ENCODE measurements at regions of chr21 and their contacts with region 1.

Region 1: DNA sequence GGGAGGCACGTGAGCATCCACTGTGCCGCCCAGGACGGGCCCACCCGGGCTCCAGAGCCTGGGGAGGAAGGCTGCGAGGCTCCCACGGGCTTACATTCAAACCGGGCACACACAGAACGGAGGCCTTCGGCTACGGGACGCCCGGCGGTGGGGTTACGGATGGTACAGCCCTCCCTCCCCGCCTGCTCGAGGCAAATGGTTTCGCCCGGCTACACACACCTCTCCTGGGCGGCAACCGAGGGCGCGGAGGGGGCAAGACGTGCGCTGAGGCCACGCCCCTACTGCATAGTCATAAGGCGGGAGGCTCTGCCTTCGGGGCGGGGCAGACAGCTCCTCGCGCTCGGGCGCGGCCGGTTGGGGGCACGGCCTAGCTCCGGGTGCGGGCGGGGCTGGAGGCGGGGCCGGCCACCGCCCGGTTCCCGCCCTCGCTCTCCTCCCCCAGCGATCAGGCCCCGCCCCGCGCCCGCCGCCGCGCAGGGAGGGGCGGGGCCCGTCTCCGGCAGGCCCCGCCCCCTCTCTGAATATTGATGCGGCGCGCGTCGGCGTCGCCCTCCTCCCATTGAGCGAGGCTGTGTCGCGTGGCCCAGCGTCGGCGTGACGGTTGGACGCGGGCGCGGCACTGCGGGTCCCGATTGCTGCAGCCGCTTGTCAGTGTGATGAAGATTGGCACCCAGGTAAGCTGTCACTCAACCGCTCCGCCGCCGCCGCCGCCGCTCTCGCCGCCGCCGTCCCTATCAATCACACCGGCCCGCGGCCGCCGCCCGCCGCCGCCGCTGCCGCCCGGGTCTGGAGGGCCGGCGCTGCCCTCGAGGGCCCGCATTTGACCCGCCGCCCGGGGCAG is at the start of gene PKNOX1:
- DNase-seq: peak; percentile 98
- ATAC-seq: peak; percentile 85
- H3K4me3 Mint-ChIP-seq: peak within 1 kb of the TSS; percentile 89
- H3K27ac Mint-ChIP-seq: peak within 1 kb of the TSS; percentile 86
- H3K4me1 Mint-ChIP-seq: peaks cover 26% of the 10 kb centered on the region
- H3K27me3 Mint-ChIP-seq: no peaks in the 10 kb centered on the region
- CTCF ChIP-seq: no peak
- total RNA-seq, gene PKNOX1: 13.3 and 15.6 TPM in 2 replicates

Region 2: DNA sequence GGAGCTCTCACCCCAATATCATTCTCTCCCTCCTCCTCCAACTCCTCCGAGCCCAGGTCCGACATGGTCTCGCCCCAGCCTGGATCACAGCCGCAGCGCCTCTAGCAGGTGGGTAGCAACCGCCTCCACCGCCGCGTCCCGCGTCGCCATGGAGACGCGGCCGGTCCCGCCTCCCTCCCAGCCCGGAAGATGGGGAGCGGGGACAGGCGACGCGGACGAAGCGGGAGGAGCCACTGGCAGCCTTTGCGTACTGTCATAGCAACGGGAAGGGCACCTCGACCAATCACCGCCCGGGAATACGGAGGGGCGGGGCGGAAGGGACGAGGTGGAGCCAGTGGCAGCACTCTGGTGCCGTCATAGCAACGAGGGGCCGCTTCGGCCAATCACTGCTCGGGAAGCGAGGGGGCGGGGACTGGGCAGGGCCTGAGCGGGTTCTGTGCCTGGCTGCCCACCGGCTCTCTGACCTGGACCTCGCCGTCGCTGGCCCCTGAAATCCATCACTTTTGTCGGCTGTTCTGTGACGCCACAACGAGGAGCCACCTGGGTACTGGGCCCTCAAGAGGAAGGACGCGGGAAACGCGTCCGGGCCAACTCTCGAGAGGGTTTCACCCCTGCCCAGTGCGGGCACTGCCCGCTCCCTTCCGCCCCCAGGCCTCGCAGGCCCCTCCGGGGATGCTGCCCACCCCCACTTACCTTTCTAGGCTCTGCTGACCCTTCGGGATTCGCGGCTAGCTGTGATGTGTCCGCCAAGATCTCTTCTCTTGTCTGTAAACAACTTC is 477.9 kb before region 1 on chr21 and contains the start of gene RSPH1:
- CTCF ChIA-PET with region 1: no interaction called
- POLR2A ChIA-PET with region 1: no interaction called
- intact Hi-C with region 1: loop called (anchors 5 kb)
- DNase-seq: peak; percentile 99
- ATAC-seq: peak; percentile 96
- H3K4me3 Mint-ChIP-seq: peak within 1 kb of the TSS; percentile 88
- H3K27ac Mint-ChIP-seq: peak within 1 kb of the TSS; percentile 83
- H3K4me1 Mint-ChIP-seq: peaks cover 13% of the 10 kb centered on the region
- H3K27me3 Mint-ChIP-seq: no peaks in the 10 kb centered on the region
- CTCF ChIP-seq: no peak
- total RNA-seq, gene RSPH1: 0.38 TPM in 1 of 2 replicates, not detected in the other

Region 3: GRCh38 chr21:42892931-42893755 is 81.1 kb before region 1 on chr21 and contains the start of gene NDUFV3:
- CTCF ChIA-PET with region 1: no interaction called
- POLR2A ChIA-PET with region 1: interaction called, 10 read pairs
- intact Hi-C with region 1: loop called (anchors 1 kb)
- DNase-seq: peak; percentile 96
- ATAC-seq: peak; percentile 96
- H3K4me3 Mint-ChIP-seq: peak within 1 kb of the TSS; percentile 87
- H3K27ac Mint-ChIP-seq: peak within 1 kb of the TSS; percentile 90
- H3K4me1 Mint-ChIP-seq: peaks cover 13% of the 10 kb centered on the region
- H3K27me3 Mint-ChIP-seq: no peaks in the 10 kb centered on the region
- CTCF ChIP-seq: no peak
- total RNA-seq, gene NDUFV3: 21.2 and 27.1 TPM in 2 replicates

Region 4: DNA sequence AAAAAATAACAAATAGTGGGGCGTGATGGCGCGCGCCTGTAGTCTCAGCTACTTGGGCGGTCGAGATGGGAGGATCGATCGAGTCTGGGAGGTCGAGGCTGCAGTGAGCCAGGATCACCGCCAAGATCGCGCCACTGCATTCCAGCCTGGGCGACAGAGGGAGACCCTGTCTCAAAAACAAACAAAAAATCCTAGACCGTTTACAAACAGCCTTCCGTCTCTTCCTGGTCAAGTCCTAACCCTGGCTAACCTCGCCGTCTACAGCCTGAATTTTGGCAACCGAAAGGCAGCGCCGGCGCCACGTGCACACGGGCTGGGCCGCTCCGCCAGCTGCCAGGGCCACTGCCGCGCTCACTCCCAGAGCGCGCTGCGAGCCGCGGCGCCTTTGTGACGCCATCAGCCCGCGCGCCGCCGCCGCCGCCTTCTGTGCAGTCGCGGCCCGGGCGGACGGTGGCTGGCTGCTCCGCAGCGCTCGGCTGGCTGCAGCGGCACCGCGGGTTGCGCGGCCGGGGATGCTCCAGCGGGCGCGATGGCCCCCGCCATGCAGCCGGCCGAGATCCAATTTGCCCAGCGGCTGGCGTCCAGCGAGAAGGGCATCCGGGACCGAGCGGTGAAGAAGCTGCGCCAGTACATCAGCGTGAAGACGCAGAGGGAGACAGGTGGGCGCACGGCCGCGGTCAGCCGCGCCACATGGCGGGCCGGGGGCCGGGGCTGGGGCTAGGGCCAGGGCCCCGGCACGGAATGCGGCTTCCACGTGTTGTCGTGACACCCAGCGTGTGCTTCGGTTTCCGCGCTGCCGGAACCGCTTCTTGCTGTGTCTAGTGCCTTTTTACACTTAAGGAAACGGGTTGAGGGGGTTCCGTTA is 685.2 kb after region 1 on chr21 and contains the starts of genes HSF2BP and RRP1B:
- CTCF ChIA-PET with region 1: no interaction called
- POLR2A ChIA-PET with region 1: interaction called, 3 read pairs
- intact Hi-C with region 1: loop called (anchors 1 kb)
- DNase-seq: peak; percentile 85
- ATAC-seq: peak; percentile 90
- H3K4me3 Mint-ChIP-seq: peak within 1 kb of the TSS; percentile 93
- H3K27ac Mint-ChIP-seq: peak within 1 kb of the TSS; percentile 87
- H3K4me1 Mint-ChIP-seq: peaks cover 30% of the 10 kb centered on the region
- H3K27me3 Mint-ChIP-seq: peaks cover 3% of the 10 kb centered on the region
- CTCF ChIP-seq: no peak
- total RNA-seq, gene HSF2BP: 0.58 and 0.61 TPM in 2 replicates
- total RNA-seq, gene RRP1B: 29.6 and 32.0 TPM in 2 replicates

Region 5: DNA sequence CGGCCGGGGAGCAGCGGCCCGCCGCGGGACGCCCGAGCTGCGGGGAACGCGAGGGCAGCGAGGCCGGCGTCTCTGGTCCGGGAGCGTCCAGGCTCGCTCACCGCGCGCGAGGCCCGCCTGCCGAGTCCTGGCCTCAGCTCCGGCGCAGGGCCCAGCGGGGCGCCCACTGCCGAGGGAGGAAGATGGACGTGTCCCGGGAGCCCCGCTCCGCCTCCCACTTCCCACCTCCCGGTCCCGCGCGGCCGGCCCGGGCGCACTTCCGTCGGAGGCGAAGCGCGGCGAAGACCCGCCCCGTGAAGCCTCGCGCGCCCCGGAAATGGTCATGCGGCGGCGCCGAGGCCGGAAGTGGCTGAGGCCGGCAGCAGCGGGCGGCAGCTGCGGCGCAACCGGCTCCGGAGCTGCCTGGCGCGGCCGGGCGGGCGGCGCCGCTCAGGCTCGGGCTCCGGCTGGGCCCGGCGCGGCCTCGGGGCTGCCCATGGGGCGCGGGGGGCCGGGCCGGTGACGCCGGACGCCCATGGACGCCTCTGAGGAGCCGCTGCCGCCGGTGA is 1037.8 kb after region 1 on chr21 and contains the start of gene TRAPPC10:
- CTCF ChIA-PET with region 1: no interaction called
- POLR2A ChIA-PET with region 1: no interaction called
- intact Hi-C with region 1: loop called (anchors 2 kb)
- DNase-seq: peak; percentile 83
- ATAC-seq: peak; percentile 66
- H3K4me3 Mint-ChIP-seq: peak within 1 kb of the TSS; percentile 87
- H3K27ac Mint-ChIP-seq: peak within 1 kb of the TSS; percentile 86
- H3K4me1 Mint-ChIP-seq: peaks cover 43% of the 10 kb centered on the region
- H3K27me3 Mint-ChIP-seq: no peaks in the 10 kb centered on the region
- CTCF ChIP-seq: no peak
- total RNA-seq, gene TRAPPC10: 77.8 and 96.0 TPM in 2 replicates

Measured in activated B cell treated with CpG ODN at 0.5 μM for 24 hours (primary cell).